Kidney (tissue), 22 donors: ENCODE measurements at regions of chr3 and their contacts with region 1.

Region 1: DNA sequence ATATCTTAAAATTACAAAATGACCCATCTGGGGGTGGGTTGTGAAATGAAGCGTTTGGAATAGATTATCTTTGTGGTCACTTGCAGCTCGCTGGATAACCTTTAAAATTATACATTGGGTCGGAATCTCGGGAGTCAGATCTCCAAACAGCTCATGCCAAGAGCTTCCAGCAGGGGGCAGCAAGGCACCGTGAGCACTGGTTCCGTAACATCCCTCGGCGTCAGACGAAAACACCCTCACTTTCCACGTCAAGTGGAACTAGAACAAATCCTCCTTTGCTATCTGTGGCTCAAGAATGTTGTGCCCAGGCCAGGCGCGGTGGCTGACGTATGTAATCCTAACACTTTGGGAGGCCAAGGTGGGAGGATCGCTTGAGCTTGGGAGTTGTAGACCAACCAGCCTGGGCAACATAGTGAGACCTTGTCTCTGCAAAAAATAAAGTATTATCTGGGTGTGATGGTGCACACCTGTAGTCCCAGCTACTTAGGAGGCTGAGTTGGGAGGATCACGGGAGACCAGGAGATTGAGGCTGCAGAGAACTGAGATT is 31.1 kb downstream of the UMPS start:
- DNase-seq: peak; percentile 70 to 90 (median 84)
- H3K4me3 ChIP-seq: peak overlapping the region in 2 of 3 donors; percentile 17 to 24
- H3K27ac ChIP-seq: no peak overlapping the region
- H3K4me1 ChIP-seq: peaks cover 0 to 2% (median 0%) of the 10 kb centered on the region in 3 donors
- H3K27me3 ChIP-seq: no peaks in the 10 kb centered on the region
- CTCF ChIP-seq: peak; percentile 97

Region 2: GRCh38 chr3:124903907-124904834 is 142.8 kb after region 1 on chr3:
- intact Hi-C with region 1: loop called (anchors 5 kb)
- DNase-seq: no peak
- H3K4me3 ChIP-seq: no peak overlapping the region
- H3K27ac ChIP-seq: no peak overlapping the region
- H3K4me1 ChIP-seq: peaks cover 0 to 7% (median 0%) of the 10 kb centered on the region in 3 donors
- H3K27me3 ChIP-seq: no peaks in the 10 kb centered on the region
- CTCF ChIP-seq: no peak